Activated CD4-positive, alpha-beta memory T cell treated with anti-CD3 and anti-CD28 coated beads for 36 hours (primary cell): ENCODE measurements at regions of chr11 and their contacts with region 1.

Region 1: DNA sequence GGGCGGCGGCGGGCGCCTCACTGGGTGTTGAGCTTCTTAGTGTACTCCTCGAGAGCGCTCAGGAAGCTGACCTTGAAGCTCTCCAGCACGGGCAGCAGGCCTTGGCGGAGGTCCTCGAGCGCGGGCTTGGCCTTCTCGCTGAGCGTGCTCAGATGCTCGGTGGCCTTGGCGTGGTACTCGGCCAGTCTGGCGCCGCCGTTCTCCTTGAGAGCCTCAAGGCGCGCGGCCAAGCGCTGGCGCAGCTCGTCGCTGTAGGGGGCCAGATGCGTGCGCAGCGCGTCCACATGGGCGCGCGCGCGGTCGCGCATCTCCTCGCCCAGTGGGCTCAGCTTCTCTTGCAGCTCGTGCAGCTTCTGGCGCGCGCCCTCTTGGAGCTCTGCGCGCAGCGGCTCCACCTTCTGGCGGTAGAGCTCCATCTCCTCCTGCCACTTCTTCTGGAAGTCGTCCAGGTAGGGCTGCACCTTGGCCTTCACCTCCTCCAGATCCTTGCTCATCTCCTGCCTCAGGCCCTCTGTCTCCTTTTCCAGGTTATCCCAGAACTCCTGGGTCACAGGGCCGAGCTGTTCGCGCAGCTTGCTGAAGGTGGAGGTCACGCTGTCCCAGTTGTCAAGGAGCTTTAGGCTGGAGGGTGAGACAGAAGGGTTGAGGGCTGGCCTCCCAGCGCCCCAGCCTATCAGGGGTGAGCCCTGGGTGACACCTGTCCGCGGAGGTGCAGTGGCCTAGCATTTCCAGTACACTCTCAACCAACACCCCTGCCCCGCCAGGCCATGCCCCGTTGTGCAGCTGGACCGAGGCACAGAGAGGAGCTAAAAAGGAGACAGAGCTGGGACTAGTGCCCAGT is 1.4 kb downstream of the APOA1 start:
- DNase-seq: peak; percentile 88
- H3K4me3 Mint-ChIP-seq: peak overlapping the region; percentile 63
- H3K27ac Mint-ChIP-seq: no peak overlapping the region
- H3K4me1 Mint-ChIP-seq: peaks cover 12% of the 10 kb centered on the region
- H3K27me3 Mint-ChIP-seq: no peaks in the 10 kb centered on the region

Region 2: GRCh38 chr11:116445108-116446047 is 390.6 kb before region 1 on chr11:
- CTCF ChIA-PET with region 1: no interaction called
- POLR2A ChIA-PET with region 1: no interaction called
- intact Hi-C with region 1: no loop called
- DNase-seq: no peak
- H3K4me3 Mint-ChIP-seq: no peak overlapping the region
- H3K27ac Mint-ChIP-seq: no peak overlapping the region
- H3K4me1 Mint-ChIP-seq: no peaks in the 10 kb centered on the region
- H3K27me3 Mint-ChIP-seq: peaks cover 9% of the 10 kb centered on the region

Region 3: DNA sequence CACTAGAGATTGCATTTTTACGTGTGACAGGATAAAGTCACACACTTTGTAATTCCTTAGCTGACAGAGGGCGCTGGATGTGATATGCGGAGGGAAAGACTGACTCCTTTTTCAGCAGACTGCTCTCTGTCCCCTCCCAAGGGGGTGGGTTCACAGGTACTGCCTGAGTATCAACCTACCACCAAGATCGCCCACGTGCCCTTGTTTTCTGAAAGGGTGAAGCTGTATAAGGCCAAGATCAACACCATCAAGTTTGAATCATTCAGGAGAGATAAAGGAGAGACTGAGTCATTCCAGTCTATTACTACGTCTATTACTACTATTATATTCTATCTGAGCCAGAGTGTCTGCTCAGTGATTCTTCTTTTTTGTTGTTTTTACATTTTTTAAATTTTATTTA is 93.9 kb before region 1 on chr11:
- CTCF ChIA-PET with region 1: interaction called, 45 read pairs
- POLR2A ChIA-PET with region 1: no interaction called
- intact Hi-C with region 1: no loop called
- DNase-seq: no peak
- H3K4me3 Mint-ChIP-seq: no peak overlapping the region
- H3K27ac Mint-ChIP-seq: no peak overlapping the region
- H3K4me1 Mint-ChIP-seq: peaks cover 6% of the 10 kb centered on the region
- H3K27me3 Mint-ChIP-seq: no peaks in the 10 kb centered on the region

Region 4: DNA sequence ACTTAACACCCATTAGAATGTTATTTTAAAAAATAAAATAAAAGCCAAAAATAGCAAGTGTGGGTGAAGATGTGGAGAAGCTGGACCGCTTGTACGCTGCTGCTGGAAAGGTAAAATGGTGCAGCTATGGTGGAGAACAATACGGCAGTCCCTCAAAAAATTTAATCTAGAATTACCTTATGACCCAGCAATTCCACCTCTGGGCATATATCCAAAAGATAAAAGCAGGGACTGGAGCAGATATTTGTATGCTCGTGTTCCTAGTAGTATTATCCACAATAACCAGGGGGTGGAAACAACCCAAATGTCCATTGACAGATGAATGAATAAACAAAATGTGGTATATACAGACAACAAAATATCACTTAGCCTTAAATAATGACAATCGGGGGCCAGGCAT is 38.2 kb before region 1 on chr11:
- CTCF ChIA-PET with region 1: interaction called, 187 read pairs
- POLR2A ChIA-PET with region 1: interaction called, 3 read pairs
- intact Hi-C with region 1: no loop called
- DNase-seq: no peak
- H3K4me3 Mint-ChIP-seq: no peak overlapping the region
- H3K27ac Mint-ChIP-seq: no peak overlapping the region
- H3K4me1 Mint-ChIP-seq: peaks cover 4% of the 10 kb centered on the region
- H3K27me3 Mint-ChIP-seq: peaks cover 12% of the 10 kb centered on the region

Region 5: GRCh38 chr11:117098269-117099232 is 262.5 kb after region 1 on chr11 and contains the start of gene SIK3:
- CTCF ChIA-PET with region 1: interaction called, 15 read pairs
- POLR2A ChIA-PET with region 1: interaction called, 6 read pairs
- intact Hi-C with region 1: no loop called
- DNase-seq: peak; percentile 94
- H3K4me3 Mint-ChIP-seq: peak within 1 kb of the TSS; percentile 88
- H3K27ac Mint-ChIP-seq: peak within 1 kb of the TSS; percentile 91
- H3K4me1 Mint-ChIP-seq: peaks cover 43% of the 10 kb centered on the region
- H3K27me3 Mint-ChIP-seq: no peaks in the 10 kb centered on the region
- total RNA-seq, gene SIK3: 26.1 to 26.2 TPM